Right cardiac atrium (tissue), 5 donors: ENCODE measurements at regions of chr14 and their contacts with region 1.

Region 1: DNA sequence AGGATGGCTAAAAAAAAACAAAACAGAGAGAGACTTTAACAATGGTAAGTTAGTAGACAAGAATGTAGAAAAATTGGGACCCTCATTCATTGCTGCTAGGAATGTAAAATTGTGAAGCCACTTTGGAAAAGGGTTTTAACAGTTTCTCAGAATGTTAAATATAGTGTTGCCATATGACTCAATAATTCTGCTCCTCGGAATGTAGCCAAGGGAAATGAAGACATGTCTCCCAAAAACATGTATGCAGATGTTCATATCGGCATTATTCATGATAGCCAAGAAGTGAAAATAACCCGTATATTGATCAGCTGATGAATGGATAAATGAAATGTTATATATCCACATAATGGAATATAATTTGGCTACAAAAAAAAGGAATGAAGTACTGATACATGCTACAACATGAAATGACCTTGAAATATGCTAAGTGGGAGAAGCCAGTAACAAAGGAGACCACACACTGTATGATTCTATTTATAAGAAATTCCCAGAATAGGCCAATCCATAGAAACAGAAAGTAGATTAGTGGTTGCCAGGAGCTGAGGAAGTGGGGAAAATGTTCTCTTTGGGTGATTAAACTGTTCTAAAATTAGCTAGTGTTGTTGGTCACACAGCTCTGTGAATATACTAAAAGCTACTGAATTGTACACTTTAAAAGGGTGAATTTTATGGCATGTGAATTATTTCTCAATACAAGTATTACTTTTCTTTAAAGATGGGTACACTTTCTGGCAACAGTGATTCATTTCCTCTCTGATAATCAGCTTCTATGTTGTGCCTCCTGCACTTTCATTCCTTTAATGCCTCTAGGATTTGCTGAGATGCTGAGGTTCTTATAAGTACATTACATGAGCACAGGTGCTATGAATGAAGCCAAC is 132.5 kb downstream of the DAAM1 start:
- DNase-seq: no peak
- ATAC-seq: peak; percentile 67 to 81
- H3K4me3 ChIP-seq: no peak overlapping the region
- H3K27ac ChIP-seq: peak overlapping the region; percentile 87
- H3K4me1 ChIP-seq: peaks cover 11% of the 10 kb centered on the region
- H3K27me3 ChIP-seq: no peaks in the 10 kb centered on the region

Region 2: GRCh38 chr14:59132796-59133494 is 188.1 kb before region 1 on chr14:
- intact Hi-C with region 1: loop called in 1 of 4 experiments (anchors 10 kb)
- DNase-seq: no peak
- ATAC-seq: no peak
- H3K4me3 ChIP-seq: no peak overlapping the region
- H3K27ac ChIP-seq: peak overlapping the region; percentile 66
- H3K4me1 ChIP-seq: no peaks in the 10 kb centered on the region
- H3K27me3 ChIP-seq: no peaks in the 10 kb centered on the region

Region 3: DNA sequence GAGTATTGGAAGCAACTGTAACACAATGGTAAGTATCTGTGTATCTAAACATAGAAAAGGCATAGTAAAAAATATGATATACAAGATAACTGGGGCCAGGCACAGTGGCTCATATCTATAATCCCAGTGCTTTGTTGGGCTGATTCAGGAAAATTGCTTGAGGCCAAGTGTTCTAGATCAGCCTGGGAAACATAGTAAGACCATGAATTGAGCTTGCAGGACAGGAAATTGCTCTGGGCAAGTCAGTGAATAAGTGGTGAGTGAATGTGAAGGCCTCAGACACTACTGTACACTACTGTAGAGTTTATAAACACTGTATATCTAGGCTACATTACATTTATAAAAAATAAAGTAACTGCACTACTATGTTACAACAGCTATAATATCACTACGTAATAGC is 68.9 kb after region 1 on chr14:
- intact Hi-C with region 1: no loop called
- DNase-seq: no peak
- ATAC-seq: no peak
- H3K4me3 ChIP-seq: no peak overlapping the region
- H3K27ac ChIP-seq: no peak overlapping the region
- H3K4me1 ChIP-seq: no peaks in the 10 kb centered on the region
- H3K27me3 ChIP-seq: no peaks in the 10 kb centered on the region